Common myeloid progenitor, CD34-positive (primary cell): ENCODE measurements at regions of chr10 and their contacts with region 1.

Region 1: GRCh38 chr10:48444266-48444665 is 137.8 kb downstream of the MAPK8 start:
- DNase-seq: peak; percentile 72 to 81 (median 79)
- H3K4me3 ChIP-seq: no peak overlapping the region
- H3K27ac ChIP-seq: no peak overlapping the region
- H3K4me1 ChIP-seq: peaks cover 0 to 57% (median 31%) of the 10 kb centered on the region in 4 experiments
- H3K27me3 ChIP-seq: no peaks in the 10 kb centered on the region

Region 2: GRCh38 chr10:48279081-48279751 is 165.1 kb before region 1 on chr10:
- CTCF ChIA-PET with region 1: no interaction called
- POLR2A ChIA-PET with region 1: no interaction called
- DNase-seq: no peak
- H3K4me3 ChIP-seq: no peak overlapping the region
- H3K27ac ChIP-seq: no peak overlapping the region
- H3K4me1 ChIP-seq: no peaks in the 10 kb centered on the region
- H3K27me3 ChIP-seq: no peaks in the 10 kb centered on the region

Region 3: DNA sequence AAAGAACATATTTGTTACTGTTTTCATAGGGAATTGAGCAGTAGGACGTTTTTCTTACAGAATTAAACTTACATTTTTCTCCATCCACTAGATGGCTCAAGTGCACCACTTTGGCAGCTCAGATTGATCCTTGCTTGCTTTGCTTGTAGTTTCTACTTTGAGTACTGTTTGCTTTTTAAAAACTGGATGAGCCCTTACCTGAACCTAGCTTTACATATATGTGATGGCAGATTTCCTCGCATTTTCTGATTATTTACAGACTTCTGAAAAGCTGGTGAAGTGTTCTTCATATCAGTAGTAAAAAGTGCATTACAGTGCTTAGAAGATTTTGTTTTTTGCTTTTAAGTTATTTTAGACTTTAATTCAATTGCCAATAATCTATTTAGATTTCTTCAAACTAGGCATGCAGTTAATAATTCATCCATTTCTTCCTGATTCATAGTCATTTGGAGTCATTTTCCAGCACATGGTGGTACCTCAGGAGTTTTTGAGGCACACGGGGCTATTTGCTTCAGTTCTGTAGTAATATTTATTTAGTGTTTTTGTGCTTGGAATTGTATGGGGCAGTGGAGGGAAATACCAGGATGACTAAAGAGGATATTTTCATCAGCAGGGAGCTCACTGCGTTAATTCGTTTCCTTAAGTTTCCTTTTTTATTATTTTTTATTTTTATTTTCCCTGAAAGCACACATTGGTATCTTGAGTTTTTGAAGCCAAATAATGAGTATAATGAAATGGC is 80.5 kb before region 1 on chr10:
- CTCF ChIA-PET with region 1: interaction called, 20 read pairs
- POLR2A ChIA-PET with region 1: interaction called, 4 read pairs
- DNase-seq: peak; percentile 81 to 89 (median 88)
- H3K4me3 ChIP-seq: peak overlapping the region in 2 of 7 experiments; percentile 3 to 6
- H3K27ac ChIP-seq: peak overlapping the region in 1 of 2 experiments; percentile 57
- H3K4me1 ChIP-seq: peaks cover 4 to 27% (median 16%) of the 10 kb centered on the region in 4 experiments
- H3K27me3 ChIP-seq: no peaks in the 10 kb centered on the region

Region 4: GRCh38 chr10:48470115-48470892 is 26.0 kb after region 1 on chr10:
- CTCF ChIA-PET with region 1: interaction called, 158 read pairs
- POLR2A ChIA-PET with region 1: no interaction called
- DNase-seq: peak; percentile 90 to 99 (median 98)
- H3K4me3 ChIP-seq: peak overlapping the region in 4 of 7 experiments; percentile 11 to 43 (median 19)
- H3K27ac ChIP-seq: peak overlapping the region; percentile 86 to 93
- H3K4me1 ChIP-seq: peaks cover 10 to 87% (median 81%) of the 10 kb centered on the region in 4 experiments
- H3K27me3 ChIP-seq: no peaks in the 10 kb centered on the region

Region 5: GRCh38 chr10:48496831-48497779 is 52.8 kb after region 1 on chr10:
- CTCF ChIA-PET with region 1: interaction called, 220 read pairs
- POLR2A ChIA-PET with region 1: interaction called, 4 read pairs
- DNase-seq: peak in 2 of 3 donors; percentile 61 to 73
- H3K4me3 ChIP-seq: peak overlapping the region in 3 of 7 experiments; percentile 20 to 49 (median 24)
- H3K27ac ChIP-seq: peak overlapping the region in 1 of 2 experiments; percentile 59
- H3K4me1 ChIP-seq: peaks cover 4 to 87% (median 85%) of the 10 kb centered on the region in 4 experiments
- H3K27me3 ChIP-seq: no peaks in the 10 kb centered on the region

Region 6: GRCh38 chr10:48512861-48513260 is 68.6 kb after region 1 on chr10:
- CTCF ChIA-PET with region 1: interaction called, 220 read pairs
- POLR2A ChIA-PET with region 1: interaction called, 3 read pairs
- DNase-seq: no peak
- H3K4me3 ChIP-seq: no peak overlapping the region
- H3K27ac ChIP-seq: no peak overlapping the region
- H3K4me1 ChIP-seq: peaks cover 5 to 63% (median 38%) of the 10 kb centered on the region in 4 experiments
- H3K27me3 ChIP-seq: no peaks in the 10 kb centered on the region